ENCODE measurements at regions of chr2 and their contacts with region 1.

Region 1: GRCh38 chr2:85538486-85539360 is at the start of gene MAT2A:
- DNase-seq: peak; percentile 88
- H3K4me3 ChIP-seq: peak within 1 kb of the TSS; percentile 88 to 90
- H3K27ac ChIP-seq: peak within 1 kb of the TSS; percentile 98
- H3K4me1 ChIP-seq: peaks cover 8% of the 10 kb centered on the region
- H3K27me3 ChIP-seq: no peaks in the 10 kb centered on the region
- CTCF ChIP-seq: peak; percentile 27 to 81 (median 59)
- POLR2A ChIP-seq: peak; percentile 99
- total RNA-seq, gene MAT2A: 103 to 134 TPM

Region 2: DNA sequence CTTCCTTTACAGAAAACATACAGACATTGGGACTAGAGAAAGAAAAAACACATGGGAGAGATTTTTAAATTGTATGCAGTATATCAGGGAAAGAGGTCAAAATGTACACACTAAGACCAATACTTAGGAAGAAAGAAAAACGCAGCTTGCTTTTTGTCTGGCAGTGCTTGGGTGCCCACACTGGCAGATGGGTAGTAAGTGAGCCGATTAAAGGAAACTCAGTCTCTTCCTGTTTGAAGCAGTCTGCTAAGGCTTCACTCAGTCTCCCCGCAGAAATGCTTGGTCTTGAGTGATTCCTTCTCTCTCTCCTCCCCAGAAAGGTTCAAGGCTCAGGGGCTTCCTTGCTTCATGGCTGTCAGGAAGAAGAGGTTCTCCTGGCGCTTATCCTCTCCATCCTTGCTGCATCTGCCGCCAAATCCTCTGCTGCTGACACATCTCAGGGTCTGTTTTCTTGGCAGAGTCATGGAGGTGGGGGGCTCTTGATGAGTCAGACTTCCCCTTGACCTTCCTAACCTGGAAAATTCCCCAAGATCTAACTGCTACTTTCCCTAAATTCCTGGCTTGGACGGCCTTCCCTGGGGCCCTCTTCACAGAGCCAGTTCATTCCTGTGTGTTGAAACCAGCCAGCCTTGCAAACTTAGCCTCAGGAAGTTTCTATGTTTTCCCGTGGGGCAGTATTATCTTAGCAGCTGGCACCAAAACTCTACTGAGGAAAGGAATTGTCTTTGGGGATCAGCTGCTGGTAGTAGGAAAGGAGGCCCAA is 643.8 kb before region 1 on chr2:
- intact Hi-C with region 1: no loop called
- DNase-seq: no peak
- H3K4me3 ChIP-seq: no peak overlapping the region
- H3K27ac ChIP-seq: no peak overlapping the region
- H3K4me1 ChIP-seq: no peaks in the 10 kb centered on the region
- H3K27me3 ChIP-seq: no peaks in the 10 kb centered on the region
- CTCF ChIP-seq: no peak
- POLR2A ChIP-seq: no peak

Region 3: DNA sequence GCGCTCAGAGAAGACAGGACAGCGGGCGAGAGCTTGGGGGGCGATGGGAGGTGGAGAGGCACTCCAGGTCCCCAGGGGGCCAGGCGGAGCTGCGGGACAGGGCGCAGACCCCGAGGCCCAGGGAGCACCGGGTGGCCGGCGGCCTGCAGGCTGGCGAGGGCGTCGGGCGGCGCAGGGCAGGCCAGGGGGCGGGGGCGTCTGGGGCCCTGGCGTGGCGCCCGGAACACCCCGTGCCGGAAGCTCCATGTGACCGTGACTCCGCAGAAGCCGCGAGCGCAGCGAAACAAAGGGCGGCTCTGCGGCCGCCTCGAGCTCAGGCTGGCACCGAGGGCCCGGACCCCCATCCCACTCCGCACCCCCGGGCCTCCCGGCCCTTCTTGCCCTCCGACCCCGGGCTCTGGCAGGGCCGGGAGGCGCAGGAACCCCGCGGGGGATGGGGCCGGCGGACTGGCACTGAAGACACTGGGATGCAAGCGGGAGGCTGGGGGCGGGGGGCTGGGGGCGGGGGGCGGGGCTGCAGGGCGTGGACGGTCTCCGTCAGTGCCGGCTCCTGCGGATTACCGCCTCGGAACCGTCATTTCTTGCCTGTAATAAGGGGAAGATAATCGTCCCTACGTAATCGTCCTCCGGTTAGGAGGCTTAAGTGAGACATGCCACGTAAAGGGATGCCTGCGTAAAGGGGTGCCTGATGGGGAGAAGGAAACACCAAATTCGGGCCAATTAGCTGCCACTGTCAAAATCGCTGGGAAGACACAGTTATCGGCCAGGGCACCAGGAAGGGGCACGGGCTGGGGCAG is 101.0 kb before region 1 on chr2:
- intact Hi-C with region 1: loop called (anchors 1 kb)
- DNase-seq: peak; percentile 78
- H3K4me3 ChIP-seq: peak overlapping the region; percentile 32 to 47
- H3K27ac ChIP-seq: peak overlapping the region; percentile 90 to 93
- H3K4me1 ChIP-seq: peaks cover 4% of the 10 kb centered on the region
- H3K27me3 ChIP-seq: no peaks in the 10 kb centered on the region
- CTCF ChIP-seq: no peak
- POLR2A ChIP-seq: peak; percentile 81

Measured in prostate gland (tissue), 2 donors.